Dendritic cell treated with granulocyte-macrophage colony-stimulating factor and Interleukin-4, amounts not matched to agents 40 ng/mL and 50 ng/mL, for 4 days (primary cell): ENCODE measurements at regions of chrX and their contacts with region 1.

Region 1: GRCh38 chrX:107776649-107777535 is 641 bp upstream of the NCBP2L start:
- H3K4me3 Mint-ChIP-seq: peak overlapping the region; percentile 70
- H3K27ac Mint-ChIP-seq: peak overlapping the region; percentile 20
- H3K4me1 Mint-ChIP-seq: peaks cover 14% of the 10 kb centered on the region
- H3K27me3 Mint-ChIP-seq: peaks cover 40% of the 10 kb centered on the region

Region 2: GRCh38 chrX:107025545-107025944 is 751.3 kb before region 1 on chrX:
- intact Hi-C with region 1: loop called (anchors 10 kb)
- H3K4me3 Mint-ChIP-seq: no peak overlapping the region
- H3K27ac Mint-ChIP-seq: no peak overlapping the region
- H3K4me1 Mint-ChIP-seq: no peaks in the 10 kb centered on the region
- H3K27me3 Mint-ChIP-seq: no peaks in the 10 kb centered on the region

Region 3: DNA sequence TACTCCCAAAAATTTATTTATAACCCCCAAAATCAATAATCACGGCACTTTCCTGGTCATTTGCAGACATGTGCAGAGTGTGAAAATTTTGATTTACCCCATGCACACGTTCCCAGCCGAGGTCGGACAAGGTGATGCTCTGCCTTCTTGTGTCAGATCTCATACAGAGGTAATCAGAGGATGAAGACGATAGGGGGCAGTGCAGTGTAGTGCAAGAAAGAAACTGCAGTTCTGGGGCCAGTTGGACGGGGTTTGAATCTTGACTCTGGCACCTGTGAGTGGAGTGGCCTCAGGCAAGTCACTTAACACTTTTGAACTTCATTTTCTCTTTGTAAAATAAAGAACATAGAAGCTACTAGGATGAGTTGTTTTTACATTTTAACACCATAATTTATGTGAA is 239.1 kb before region 1 on chrX:
- intact Hi-C with region 1: loop called (anchors 1 kb)
- H3K4me3 Mint-ChIP-seq: no peak overlapping the region
- H3K27ac Mint-ChIP-seq: no peak overlapping the region
- H3K4me1 Mint-ChIP-seq: no peaks in the 10 kb centered on the region
- H3K27me3 Mint-ChIP-seq: no peaks in the 10 kb centered on the region

Region 4: DNA sequence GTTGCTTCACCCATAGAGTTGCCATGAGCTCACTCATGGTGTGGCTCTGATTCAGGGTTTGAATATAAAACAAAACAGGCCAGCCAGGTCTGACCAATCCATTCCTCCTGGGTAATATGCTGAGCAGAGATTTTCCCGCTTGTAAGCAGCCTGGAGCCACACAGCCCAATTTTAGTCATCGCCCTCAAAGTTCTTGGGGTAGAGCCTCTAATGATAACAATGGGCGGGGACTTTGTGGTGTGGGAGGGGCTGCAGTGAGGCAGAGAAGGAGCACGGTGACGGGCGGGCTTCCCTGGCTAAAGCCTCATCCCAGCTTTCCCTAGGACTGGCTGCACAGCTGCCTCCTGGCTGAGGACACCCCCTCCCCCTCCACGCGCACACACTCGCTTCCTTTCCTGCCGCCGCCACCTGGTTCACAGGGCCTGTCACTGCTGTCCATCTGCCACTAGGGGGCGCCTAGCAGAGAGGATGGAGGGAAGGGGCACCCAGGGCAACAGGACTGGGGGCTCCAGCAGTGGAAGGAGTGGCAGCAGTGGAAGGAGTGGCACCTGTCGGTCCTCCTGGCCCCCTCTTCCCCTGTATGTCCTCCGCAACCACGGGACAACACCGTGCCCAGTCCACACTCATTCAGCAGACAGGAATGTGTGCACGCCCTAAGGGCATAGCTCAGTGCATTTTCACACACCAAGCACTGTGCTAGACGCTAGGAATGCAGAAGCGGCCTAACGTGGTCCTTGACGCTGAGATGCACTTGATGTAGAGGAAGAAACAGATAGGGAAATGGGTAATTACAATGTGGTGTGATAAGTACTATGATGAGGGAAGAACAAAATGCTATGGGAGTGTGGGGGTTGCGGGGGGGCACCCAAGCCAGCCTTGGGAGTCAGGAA is 121.8 kb before region 1 on chrX:
- intact Hi-C with region 1: loop called (anchors 1 kb)
- H3K4me3 Mint-ChIP-seq: no peak overlapping the region
- H3K27ac Mint-ChIP-seq: no peak overlapping the region
- H3K4me1 Mint-ChIP-seq: peaks cover 15% of the 10 kb centered on the region
- H3K27me3 Mint-ChIP-seq: no peaks in the 10 kb centered on the region

Region 5: GRCh38 chrX:107871136-107871535 is 94.2 kb after region 1 on chrX:
- intact Hi-C with region 1: no loop called
- H3K4me3 Mint-ChIP-seq: no peak overlapping the region
- H3K27ac Mint-ChIP-seq: no peak overlapping the region
- H3K4me1 Mint-ChIP-seq: no peaks in the 10 kb centered on the region
- H3K27me3 Mint-ChIP-seq: peaks cover 6% of the 10 kb centered on the region